ENCODE measurements at regions of chr12 and their contacts with region 1.

Region 1: GRCh38 chr12:100266835-100267618 is at the starts of genes DEPDC4 and SCYL2:
- DNase-seq: peak; percentile 84 to 97 (median 93)
- ATAC-seq: peak; percentile 93
- H3K4me3 ChIP-seq: peak within 1 kb of the TSS; percentile 81 to 96
- H3K4me3 Mint-ChIP-seq: peak within 1 kb of the TSS; percentile 99
- H3K27ac ChIP-seq: peak within 1 kb of the TSS; percentile 92 to 95
- H3K27ac Mint-ChIP-seq: peak within 1 kb of the TSS; percentile 98
- H3K4me1 ChIP-seq: peaks cover 19% of the 10 kb centered on the region
- H3K4me1 Mint-ChIP-seq: peaks cover 43% of the 10 kb centered on the region
- H3K27me3 ChIP-seq: no peaks in the 10 kb centered on the region
- H3K27me3 Mint-ChIP-seq: no peaks in the 10 kb centered on the region
- CTCF ChIP-seq: no peak
- total RNA-seq, gene DEPDC4: 0.33 TPM in 1 of 2 experiments, not detected in the other
- total RNA-seq, gene SCYL2: 40.9 to 48.4 TPM

Region 2: DNA sequence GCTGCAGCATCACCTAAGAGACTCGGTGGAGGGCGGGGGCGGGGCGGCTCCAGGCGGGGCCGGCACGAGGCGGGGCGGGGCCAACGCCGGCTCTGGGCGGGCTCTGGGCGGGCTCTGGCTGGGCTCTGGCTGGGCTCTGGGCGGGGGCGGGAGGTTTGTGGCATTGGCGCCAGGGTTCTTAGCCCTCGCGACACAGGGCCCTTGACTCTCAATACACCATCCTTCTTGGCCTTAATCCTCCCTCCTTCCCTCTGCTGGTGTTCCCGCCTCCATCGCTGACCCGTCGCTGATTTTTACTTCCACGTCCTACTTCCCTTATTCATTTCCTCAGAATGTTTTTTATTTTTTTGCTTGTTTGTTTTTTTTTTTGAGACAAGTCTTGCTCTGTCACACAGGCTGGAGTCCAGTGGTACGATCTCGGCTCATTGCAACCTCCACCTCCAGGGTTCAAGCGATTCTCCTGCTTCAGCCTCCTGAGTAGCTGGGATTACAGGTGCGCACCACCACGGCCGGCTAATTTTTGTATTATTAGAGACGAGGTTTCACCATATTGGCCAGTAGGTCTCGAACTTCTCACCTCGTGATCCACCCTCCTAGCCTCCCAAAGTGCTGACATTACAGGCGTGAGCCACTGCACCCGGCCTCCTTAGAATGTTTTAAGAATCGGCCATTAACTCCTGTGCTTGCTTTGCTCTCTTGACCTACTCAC is 124.0 kb before region 1 on chr12 and contains the start of gene BLTP3B:
- CTCF ChIA-PET with region 1: interaction called, 3 read pairs
- POLR2A ChIA-PET with region 1: no interaction called
- intact Hi-C with region 1: loop called (anchors 1 to 2 kb)
- DNase-seq: peak; percentile 86 to 92 (median 89)
- ATAC-seq: peak; percentile 96
- H3K4me3 ChIP-seq: peak within 1 kb of the TSS; percentile 94 to 97
- H3K4me3 Mint-ChIP-seq: peak within 1 kb of the TSS; percentile 93
- H3K27ac ChIP-seq: peak within 1 kb of the TSS; percentile 90 to 95
- H3K27ac Mint-ChIP-seq: peak within 1 kb of the TSS; percentile 97
- H3K4me1 ChIP-seq: peaks cover 6% of the 10 kb centered on the region
- H3K4me1 Mint-ChIP-seq: peaks cover 36% of the 10 kb centered on the region
- H3K27me3 ChIP-seq: no peaks in the 10 kb centered on the region
- H3K27me3 Mint-ChIP-seq: no peaks in the 10 kb centered on the region
- CTCF ChIP-seq: no peak
- total RNA-seq, gene BLTP3B: 29.4 to 37.8 TPM

Region 3: GRCh38 chr12:100215209-100215608 is 51.8 kb before region 1 on chr12:
- CTCF ChIA-PET with region 1: no interaction called
- POLR2A ChIA-PET with region 1: no interaction called
- intact Hi-C with region 1: loop called in 1 of 2 experiments (anchors 5 kb)
- DNase-seq: no peak
- ATAC-seq: no peak
- H3K4me3 ChIP-seq: no peak overlapping the region
- H3K4me3 Mint-ChIP-seq: no peak overlapping the region
- H3K27ac ChIP-seq: no peak overlapping the region
- H3K27ac Mint-ChIP-seq: no peak overlapping the region
- H3K4me1 ChIP-seq: no peaks in the 10 kb centered on the region
- H3K4me1 Mint-ChIP-seq: no peaks in the 10 kb centered on the region
- H3K27me3 ChIP-seq: no peaks in the 10 kb centered on the region
- H3K27me3 Mint-ChIP-seq: no peaks in the 10 kb centered on the region
- CTCF ChIP-seq: no peak

Region 4: DNA sequence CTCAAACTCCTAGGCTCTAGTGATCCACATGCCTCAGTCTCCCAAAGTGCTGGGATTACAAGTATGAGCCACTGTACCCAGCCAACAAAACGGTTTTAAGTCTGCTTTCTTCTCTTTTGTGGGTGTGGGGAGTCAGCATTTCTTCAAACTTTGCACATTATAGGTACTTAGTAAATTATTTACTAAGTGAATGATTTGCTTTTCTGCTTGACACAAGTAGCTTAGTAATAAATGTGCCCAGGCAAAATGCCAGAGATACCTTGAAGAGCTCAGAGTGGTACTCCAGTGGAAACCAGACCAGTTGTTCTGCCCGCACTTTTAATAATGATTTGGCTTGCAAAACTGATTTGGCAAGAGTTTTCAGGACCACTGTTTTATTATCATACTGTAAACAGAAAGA is 15.1 kb before region 1 on chr12:
- CTCF ChIA-PET with region 1: no interaction called
- POLR2A ChIA-PET with region 1: no interaction called
- intact Hi-C with region 1: no loop called
- DNase-seq: no peak
- ATAC-seq: no peak
- H3K4me3 ChIP-seq: no peak overlapping the region
- H3K4me3 Mint-ChIP-seq: no peak overlapping the region
- H3K27ac ChIP-seq: no peak overlapping the region
- H3K27ac Mint-ChIP-seq: no peak overlapping the region
- H3K4me1 ChIP-seq: no peaks in the 10 kb centered on the region
- H3K4me1 Mint-ChIP-seq: no peaks in the 10 kb centered on the region
- H3K27me3 ChIP-seq: no peaks in the 10 kb centered on the region
- H3K27me3 Mint-ChIP-seq: no peaks in the 10 kb centered on the region
- CTCF ChIP-seq: no peak

Region 5: GRCh38 chr12:101407436-101408345 is 1140.7 kb after region 1 on chr12 and contains the start of gene ARL1:
- CTCF ChIA-PET with region 1: no interaction called
- POLR2A ChIA-PET with region 1: no interaction called
- intact Hi-C with region 1: loop called in 1 of 2 experiments (anchors 5 kb)
- DNase-seq: peak; percentile 47 to 87 (median 76)
- ATAC-seq: peak; percentile 82
- H3K4me3 ChIP-seq: peak within 1 kb of the TSS; percentile 90 to 98
- H3K4me3 Mint-ChIP-seq: peak within 1 kb of the TSS; percentile 97
- H3K27ac ChIP-seq: peak within 1 kb of the TSS; percentile 84 to 85
- H3K27ac Mint-ChIP-seq: peak within 1 kb of the TSS; percentile 96
- H3K4me1 ChIP-seq: peaks cover 19% of the 10 kb centered on the region
- H3K4me1 Mint-ChIP-seq: peaks cover 32% of the 10 kb centered on the region
- H3K27me3 ChIP-seq: no peaks in the 10 kb centered on the region
- H3K27me3 Mint-ChIP-seq: no peaks in the 10 kb centered on the region
- CTCF ChIP-seq: no peak
- total RNA-seq, gene ARL1: 24.7 to 29.3 TPM

Region 6: GRCh38 chr12:101876861-101877815 is 1610.1 kb after region 1 on chr12 and contains the start of gene DRAM1:
- CTCF ChIA-PET with region 1: no interaction called
- POLR2A ChIA-PET with region 1: no interaction called
- intact Hi-C with region 1: no loop called
- DNase-seq: peak; percentile 43 to 89 (median 67)
- ATAC-seq: peak; percentile 79
- H3K4me3 ChIP-seq: peak within 1 kb of the TSS; percentile 78 to 90
- H3K4me3 Mint-ChIP-seq: peak within 1 kb of the TSS; percentile 91
- H3K27ac ChIP-seq: peak within 1 kb of the TSS; percentile 85 to 88
- H3K27ac Mint-ChIP-seq: peak within 1 kb of the TSS; percentile 77
- H3K4me1 ChIP-seq: peaks cover 7% of the 10 kb centered on the region
- H3K4me1 Mint-ChIP-seq: peaks cover 11% of the 10 kb centered on the region
- H3K27me3 ChIP-seq: no peaks in the 10 kb centered on the region
- H3K27me3 Mint-ChIP-seq: no peaks in the 10 kb centered on the region
- CTCF ChIP-seq: no peak
- total RNA-seq, gene DRAM1: 3.5 to 7.5 TPM

Region 7: GRCh38 chr12:102119674-102120563 is 1852.9 kb after region 1 on chr12 and contains the starts of genes NUP37 and PARPBP:
- CTCF ChIA-PET with region 1: no interaction called
- POLR2A ChIA-PET with region 1: no interaction called
- intact Hi-C with region 1: loop called in 1 of 2 experiments (anchors 2 kb)
- DNase-seq: peak; percentile 86 to 95 (median 92)
- ATAC-seq: peak; percentile 86
- H3K4me3 ChIP-seq: peak within 1 kb of the TSS; percentile 65 to 91
- H3K4me3 Mint-ChIP-seq: peak within 1 kb of the TSS; percentile 85
- H3K27ac ChIP-seq: peak within 1 kb of the TSS; percentile 70 to 86
- H3K27ac Mint-ChIP-seq: peak within 1 kb of the TSS; percentile 95
- H3K4me1 ChIP-seq: peaks cover 14% of the 10 kb centered on the region
- H3K4me1 Mint-ChIP-seq: peaks cover 28% of the 10 kb centered on the region
- H3K27me3 ChIP-seq: no peaks in the 10 kb centered on the region
- H3K27me3 Mint-ChIP-seq: no peaks in the 10 kb centered on the region
- CTCF ChIP-seq: no peak
- total RNA-seq, gene NUP37: 8.8 to 11.3 TPM
- total RNA-seq, gene PARPBP: 1.8 to 2.4 TPM

Measured in CD8-positive, alpha-beta T cell (primary cell).